Activated CD4-positive, alpha-beta T cell treated with anti-CD3 and anti-CD28 coated beads, Interleukin-2, amount 10 ng/mL, durations not matched to agents 24 days and 14 days (primary cell): ENCODE measurements at regions of chr12 and their contacts with region 1.

Region 1: GRCh38 chr12:1795785-1796514 is 24.4 kb upstream of the LRTM2 start:
- DNase-seq: peak; percentile 98
- H3K4me3 Mint-ChIP-seq: peak overlapping the region; percentile 86
- H3K27ac Mint-ChIP-seq: peak overlapping the region; percentile 90
- H3K4me1 Mint-ChIP-seq: peaks cover 16% of the 10 kb centered on the region
- H3K27me3 Mint-ChIP-seq: no peaks in the 10 kb centered on the region

Region 2: GRCh38 chr12:1661553-1662335 is 134.2 kb before region 1 on chr12:
- intact Hi-C with region 1: loop called (anchors 1 kb)
- DNase-seq: peak; percentile 95
- H3K4me3 Mint-ChIP-seq: peak overlapping the region; percentile 89
- H3K27ac Mint-ChIP-seq: peak overlapping the region; percentile 83
- H3K4me1 Mint-ChIP-seq: peaks cover 26% of the 10 kb centered on the region
- H3K27me3 Mint-ChIP-seq: peaks cover 3% of the 10 kb centered on the region

Region 3: DNA sequence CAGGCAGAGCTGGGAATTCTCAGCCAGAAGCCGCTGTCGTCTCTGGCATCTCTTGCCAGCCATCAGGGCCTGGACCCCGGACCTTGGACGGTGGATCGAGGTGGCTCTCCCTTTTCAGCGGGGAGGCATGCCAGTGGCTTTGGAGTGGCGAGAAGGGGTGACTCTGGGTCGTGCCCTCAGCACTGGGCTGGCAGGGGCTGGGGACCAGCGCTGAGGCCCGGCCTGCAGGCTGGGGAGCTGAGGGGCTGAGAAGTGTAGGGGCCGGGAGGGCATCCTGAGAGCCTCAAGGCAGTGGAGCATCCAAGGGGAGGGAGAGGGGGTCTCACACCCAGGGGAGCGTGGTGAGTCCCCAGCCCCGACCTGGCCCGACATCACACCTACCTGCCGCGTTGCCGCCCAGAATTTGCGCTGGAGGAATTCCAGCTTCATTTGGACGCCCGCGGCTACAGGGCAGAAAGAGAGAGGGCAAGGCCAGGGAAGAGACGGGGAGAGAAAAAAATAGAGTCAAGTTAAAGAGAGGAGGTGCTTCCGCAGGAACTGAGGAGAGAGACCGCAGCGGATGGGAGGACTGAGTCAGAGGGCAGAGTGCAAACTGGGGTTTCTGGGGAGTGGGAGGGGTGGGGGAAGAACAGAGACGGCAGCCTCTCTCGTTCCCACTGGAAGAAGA is 15.5 kb after region 1 on chr12:
- intact Hi-C with region 1: no loop called
- DNase-seq: peak; percentile 74
- H3K4me3 Mint-ChIP-seq: peak overlapping the region; percentile 63
- H3K27ac Mint-ChIP-seq: peak overlapping the region; percentile 78
- H3K4me1 Mint-ChIP-seq: peaks cover 1% of the 10 kb centered on the region
- H3K27me3 Mint-ChIP-seq: peaks cover under 1% of the 10 kb centered on the region

Region 4: DNA sequence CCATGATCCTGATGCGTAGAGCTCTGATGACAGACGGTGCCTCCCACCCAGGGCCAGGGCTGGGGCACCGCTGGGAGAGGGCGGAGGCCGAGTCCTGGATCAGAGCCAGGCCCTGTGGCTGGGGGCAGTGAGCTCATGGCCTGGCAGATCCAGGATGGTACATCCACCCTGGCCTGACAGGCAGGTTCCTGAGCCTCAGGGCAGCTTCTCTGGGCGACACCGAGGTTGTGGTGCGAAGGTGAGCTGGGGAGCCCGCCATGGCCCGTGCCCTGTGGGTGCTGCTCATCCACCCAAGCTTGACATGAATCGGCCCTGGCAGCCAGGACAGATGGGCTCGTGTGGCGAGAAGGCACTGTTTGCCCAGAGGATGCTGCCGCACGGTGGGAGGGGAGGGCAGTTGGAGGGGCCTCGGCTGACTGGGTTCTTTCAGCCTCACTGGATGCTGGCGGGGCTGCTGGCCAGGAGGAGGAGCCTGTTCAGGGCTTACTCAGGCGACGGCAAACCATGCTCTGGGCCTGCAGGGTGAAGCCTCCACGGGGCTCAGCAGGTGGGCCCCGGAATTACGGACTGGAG is 41.0 kb after region 1 on chr12:
- intact Hi-C with region 1: no loop called
- DNase-seq: no peak
- H3K4me3 Mint-ChIP-seq: no peak overlapping the region
- H3K27ac Mint-ChIP-seq: no peak overlapping the region
- H3K4me1 Mint-ChIP-seq: no peaks in the 10 kb centered on the region
- H3K27me3 Mint-ChIP-seq: peaks cover 5% of the 10 kb centered on the region

Region 5: DNA sequence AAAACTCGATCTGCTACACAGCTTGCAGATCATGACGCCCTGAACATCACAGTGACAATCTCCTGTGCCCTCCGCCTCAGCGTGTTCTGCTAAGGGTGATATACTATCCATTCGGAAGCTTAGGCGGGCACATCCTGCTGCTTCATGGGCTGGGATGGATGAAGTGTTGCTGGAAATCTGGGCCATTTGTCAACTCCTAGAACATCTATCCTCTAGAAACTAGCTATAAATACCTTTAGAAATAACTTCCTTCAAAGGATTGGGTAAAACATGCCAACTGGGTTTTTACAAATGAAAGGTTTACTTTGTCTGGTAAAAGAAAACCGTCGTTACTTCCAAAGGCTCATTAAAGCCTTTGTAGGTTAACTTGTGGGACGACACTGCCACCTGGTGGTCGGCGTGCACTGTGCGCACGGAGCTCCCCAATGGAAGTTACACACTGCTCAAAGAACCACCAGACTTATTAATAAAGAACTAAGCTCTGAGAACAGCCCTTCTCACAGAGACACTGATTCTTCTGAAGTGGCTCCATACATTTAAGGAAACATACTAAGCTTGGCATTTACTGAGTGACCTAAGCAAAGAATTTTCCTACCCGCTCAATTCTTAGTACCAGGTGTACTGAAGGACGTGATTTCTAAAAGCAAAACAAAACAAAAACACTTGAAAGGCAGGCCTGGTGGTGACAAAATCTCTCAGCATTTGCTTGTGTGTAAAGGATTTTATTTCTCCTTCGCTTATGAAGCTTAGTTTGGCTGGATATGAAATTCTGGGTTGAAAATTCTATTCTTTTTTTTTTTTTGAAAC is 144.1 kb after region 1 on chr12:
- intact Hi-C with region 1: loop called (anchors 1 kb)
- DNase-seq: peak; percentile 96
- H3K4me3 Mint-ChIP-seq: no peak overlapping the region
- H3K27ac Mint-ChIP-seq: no peak overlapping the region
- H3K4me1 Mint-ChIP-seq: peaks cover 4% of the 10 kb centered on the region
- H3K27me3 Mint-ChIP-seq: no peaks in the 10 kb centered on the region

Region 6: GRCh38 chr12:2034633-2035430 is 238.9 kb after region 1 on chr12:
- intact Hi-C with region 1: loop called (anchors 5 kb)
- DNase-seq: peak; percentile 97
- H3K4me3 Mint-ChIP-seq: peak overlapping the region; percentile 63
- H3K27ac Mint-ChIP-seq: peak overlapping the region; percentile 18
- H3K4me1 Mint-ChIP-seq: peaks cover 10% of the 10 kb centered on the region
- H3K27me3 Mint-ChIP-seq: peaks cover 70% of the 10 kb centered on the region